PC-3 (cell line): ENCODE measurements at regions of chr1 and their contacts with region 1.

Region 1: DNA sequence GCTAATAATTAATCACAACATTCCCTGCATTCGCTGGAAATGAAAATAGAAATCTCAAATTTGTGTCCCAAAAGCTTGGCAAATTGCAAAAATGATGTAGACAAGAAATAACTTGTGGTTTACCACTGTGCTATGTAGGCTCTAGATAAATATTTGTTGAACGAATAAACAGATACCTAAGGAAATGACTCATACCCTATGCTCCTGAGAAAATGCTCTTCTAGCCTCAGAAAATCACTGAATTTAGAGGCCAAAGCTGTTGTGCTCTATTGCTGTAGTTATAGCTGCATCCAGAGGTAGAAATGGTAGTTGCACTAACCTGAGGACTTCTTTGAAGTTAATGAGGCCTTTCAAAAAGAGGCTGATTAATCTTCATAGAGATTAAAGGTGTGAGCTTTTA is 142.0 kb upstream of the ZNHIT6 start:
- DNase-seq: peak; percentile 96
- ATAC-seq: peak; percentile 98
- H3K4me3 ChIP-seq: no peak overlapping the region
- H3K27ac ChIP-seq: peak overlapping the region; percentile 89
- H3K4me1 ChIP-seq: peaks cover 26% of the 10 kb centered on the region
- H3K27me3 ChIP-seq: no peaks in the 10 kb centered on the region
- CTCF ChIP-seq: peak; percentile 77

Region 2: DNA sequence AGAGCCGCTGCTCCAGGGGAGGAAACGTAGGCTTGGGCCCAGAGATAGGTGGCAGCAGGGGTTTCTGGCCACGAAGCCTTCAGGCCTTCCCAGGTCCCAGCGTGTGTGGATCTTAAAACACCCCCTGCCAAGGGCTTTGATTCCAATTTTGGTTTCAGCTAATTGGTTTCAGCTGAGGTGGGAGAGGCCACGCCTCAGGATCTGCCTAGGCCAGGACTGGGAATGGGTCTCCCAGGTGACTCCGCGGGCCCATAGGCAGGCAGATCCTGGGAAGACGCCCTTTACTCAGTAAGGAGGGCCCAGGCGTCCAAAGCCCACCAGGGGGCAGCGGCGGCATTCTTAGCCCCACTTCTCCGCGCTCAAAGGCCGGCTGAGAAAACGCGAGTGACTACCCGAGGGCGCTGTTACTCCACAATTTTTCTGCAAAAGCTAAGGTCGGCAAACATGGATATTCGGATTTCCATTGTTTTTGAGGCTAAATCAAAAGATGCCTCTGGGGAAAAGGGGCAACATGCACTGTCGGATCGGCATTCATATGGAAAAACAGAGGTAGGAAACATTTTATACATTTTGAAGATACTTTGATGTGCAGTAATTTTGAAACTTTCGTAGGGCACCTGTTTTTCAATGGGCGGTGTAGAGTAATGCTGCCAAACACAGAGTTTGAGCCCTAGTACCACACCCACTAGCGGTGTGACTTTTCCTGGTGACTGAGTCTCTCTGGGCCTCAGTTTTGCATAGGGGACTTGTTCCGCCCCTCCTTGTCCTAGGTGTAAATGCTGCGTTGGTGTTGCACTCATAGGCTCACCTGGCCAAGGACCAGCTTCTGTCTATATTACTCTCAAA is 542.0 kb before region 1 on chr1:
- CTCF ChIA-PET with region 1: no interaction called
- POLR2A ChIA-PET with region 1: no interaction called
- intact Hi-C with region 1: loop called (anchors 1 kb)
- DNase-seq: peak; percentile 93
- ATAC-seq: peak; percentile 98
- H3K4me3 ChIP-seq: peak overlapping the region; percentile 11; the same call in 1 of the 2 replicates
- H3K27ac ChIP-seq: peak overlapping the region; percentile 23
- H3K4me1 ChIP-seq: peaks cover 18% of the 10 kb centered on the region
- H3K27me3 ChIP-seq: no peaks in the 10 kb centered on the region
- CTCF ChIP-seq: peak; percentile 99

Region 3: DNA sequence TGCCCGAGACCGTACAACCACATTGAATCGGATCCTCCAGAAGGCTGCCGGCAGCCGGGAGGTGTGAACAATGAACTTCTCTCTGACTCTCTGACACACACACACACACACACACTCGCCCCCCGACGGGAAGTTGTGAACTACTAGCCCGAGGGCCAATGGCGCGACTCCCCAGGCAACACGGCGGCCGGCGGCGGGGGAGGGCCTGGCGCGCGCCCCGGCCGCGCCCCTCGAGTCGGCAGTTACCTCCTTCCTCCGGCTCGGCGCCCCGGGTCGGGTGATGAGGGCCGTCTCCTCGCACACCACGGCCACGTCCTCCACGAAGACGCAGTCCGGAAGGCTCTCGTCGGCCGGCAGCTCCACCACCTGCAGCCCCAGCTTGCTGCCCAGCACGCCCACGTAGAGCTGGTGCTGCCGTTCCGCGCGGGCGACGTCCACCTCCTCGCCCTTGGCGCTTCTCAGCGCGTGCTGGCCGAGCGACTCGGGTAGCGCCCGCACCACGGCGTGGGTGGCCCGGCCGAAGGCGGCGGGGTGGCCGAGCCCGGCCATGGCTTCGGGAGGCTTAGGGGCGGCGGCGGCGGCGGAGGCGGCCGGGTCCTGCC is 385.6 kb before region 1 on chr1:
- CTCF ChIA-PET with region 1: no interaction called
- POLR2A ChIA-PET with region 1: interaction called, 3 read pairs
- intact Hi-C with region 1: loop called (anchors 1 kb)
- DNase-seq: peak; percentile 73
- ATAC-seq: peak; percentile 69
- H3K4me3 ChIP-seq: peak overlapping the region; percentile 94
- H3K27ac ChIP-seq: no peak overlapping the region
- H3K4me1 ChIP-seq: peaks cover 48% of the 10 kb centered on the region
- H3K27me3 ChIP-seq: no peaks in the 10 kb centered on the region
- CTCF ChIP-seq: no peak

Region 4: DNA sequence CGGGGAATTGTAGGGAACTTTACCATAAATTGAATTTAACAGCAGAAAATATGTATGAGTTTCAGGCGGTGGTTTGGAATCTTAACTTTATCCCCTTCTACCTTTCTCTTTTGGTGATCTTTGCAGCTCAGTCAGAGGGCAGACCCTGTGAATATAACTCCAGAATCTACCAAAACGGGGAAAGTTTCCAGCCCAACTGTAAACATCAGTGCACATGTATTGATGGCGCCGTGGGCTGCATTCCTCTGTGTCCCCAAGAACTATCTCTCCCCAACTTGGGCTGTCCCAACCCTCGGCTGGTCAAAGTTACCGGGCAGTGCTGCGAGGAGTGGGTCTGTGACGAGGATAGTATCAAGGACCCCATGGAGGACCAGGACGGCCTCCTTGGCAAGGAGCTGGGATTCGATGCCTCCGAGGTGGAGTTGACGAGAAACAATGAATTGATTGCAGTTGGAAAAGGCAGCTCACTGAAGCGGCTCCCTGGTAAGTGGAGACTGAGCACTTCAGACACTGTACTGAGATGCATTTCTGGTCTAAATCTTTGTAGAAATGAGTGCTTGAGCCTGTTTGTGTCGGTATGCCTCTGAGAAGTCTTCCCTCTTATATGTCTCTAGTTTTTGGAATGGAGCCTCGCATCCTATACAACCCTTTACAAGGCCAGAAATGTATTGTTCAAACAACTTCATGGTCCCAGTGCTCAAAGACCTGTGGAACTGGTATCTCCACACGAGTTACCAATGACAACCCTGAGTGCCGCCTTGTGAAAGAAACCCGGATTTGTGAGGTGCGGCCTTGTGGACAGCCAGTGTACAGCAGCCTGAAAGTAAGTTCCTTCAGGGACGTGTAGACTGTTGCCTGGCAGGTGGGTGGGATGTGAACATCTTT is 268.2 kb before region 1 on chr1:
- CTCF ChIA-PET with region 1: interaction called, 5 read pairs
- POLR2A ChIA-PET with region 1: interaction called, 11 read pairs
- intact Hi-C with region 1: loop called (anchors 1 kb)
- DNase-seq: peak; percentile 89
- ATAC-seq: peak; percentile 25
- H3K4me3 ChIP-seq: peak overlapping the region; percentile 97
- H3K27ac ChIP-seq: peak overlapping the region; percentile 74
- H3K4me1 ChIP-seq: peaks cover 55% of the 10 kb centered on the region
- H3K27me3 ChIP-seq: no peaks in the 10 kb centered on the region
- CTCF ChIP-seq: peak; percentile 64

Region 5: GRCh38 chr1:85692730-85693314 is 157.4 kb before region 1 on chr1:
- CTCF ChIA-PET with region 1: interaction called, 8 read pairs
- POLR2A ChIA-PET with region 1: interaction called, 9 read pairs
- intact Hi-C with region 1: loop called (anchors 1 kb)
- DNase-seq: peak; percentile 72
- ATAC-seq: peak; percentile 77
- H3K4me3 ChIP-seq: no peak overlapping the region
- H3K27ac ChIP-seq: peak overlapping the region; percentile 16; the same call in 1 of the 2 replicates
- H3K4me1 ChIP-seq: peaks cover 14% of the 10 kb centered on the region
- H3K27me3 ChIP-seq: no peaks in the 10 kb centered on the region
- CTCF ChIP-seq: peak; percentile 86

Region 6: GRCh38 chr1:85762804-85763203 is 87.4 kb before region 1 on chr1:
- CTCF ChIA-PET with region 1: no interaction called
- POLR2A ChIA-PET with region 1: no interaction called
- intact Hi-C with region 1: loop called (anchors 1 kb)
- DNase-seq: peak; percentile 88
- ATAC-seq: peak; percentile 89
- H3K4me3 ChIP-seq: no peak overlapping the region
- H3K27ac ChIP-seq: peak overlapping the region; percentile 68
- H3K4me1 ChIP-seq: peaks cover 16% of the 10 kb centered on the region
- H3K27me3 ChIP-seq: no peaks in the 10 kb centered on the region
- CTCF ChIP-seq: no peak

Region 7: DNA sequence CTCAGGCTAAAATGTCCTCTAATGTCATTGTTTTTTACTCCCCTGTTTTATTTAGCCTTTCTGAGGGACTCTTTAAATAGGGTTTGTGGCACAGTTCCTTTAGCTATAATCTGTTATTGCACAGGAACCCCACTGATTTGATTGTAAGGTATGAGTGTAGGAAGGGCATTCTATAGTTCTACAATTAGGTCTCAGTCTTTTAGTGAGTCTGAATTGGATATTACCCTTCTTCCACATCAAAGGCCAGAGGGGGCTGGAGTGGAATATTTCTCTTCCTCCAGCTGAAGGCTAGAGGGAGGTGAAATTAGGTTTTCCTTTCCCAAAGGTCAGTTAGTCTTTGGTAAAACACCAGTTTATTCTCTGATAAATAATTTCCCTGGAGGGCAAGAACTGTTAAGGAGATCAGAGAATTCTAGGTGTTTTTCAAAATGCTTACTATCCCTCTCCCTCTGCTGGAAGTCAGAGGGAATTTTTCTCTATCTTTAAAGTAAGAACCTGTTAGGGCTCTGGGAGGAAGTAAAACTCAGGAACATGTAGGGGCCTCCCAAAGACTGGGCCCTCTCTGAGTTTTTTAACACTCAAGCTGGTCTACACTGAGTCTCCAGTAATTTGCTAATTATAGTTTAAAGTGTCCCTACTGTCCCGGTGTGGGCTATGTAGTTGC is 34.3 kb after region 1 on chr1:
- CTCF ChIA-PET with region 1: no interaction called
- POLR2A ChIA-PET with region 1: no interaction called
- intact Hi-C with region 1: loop called (anchors 1 kb)
- DNase-seq: peak; percentile 61
- ATAC-seq: peak; percentile 84
- H3K4me3 ChIP-seq: no peak overlapping the region
- H3K27ac ChIP-seq: no peak overlapping the region
- H3K4me1 ChIP-seq: peaks cover 7% of the 10 kb centered on the region; the same call in 1 of the 2 replicates
- H3K27me3 ChIP-seq: no peaks in the 10 kb centered on the region
- CTCF ChIP-seq: peak; percentile 74